ENCODE measurements at regions of chr11 and their contacts with region 1.

Region 1: DNA sequence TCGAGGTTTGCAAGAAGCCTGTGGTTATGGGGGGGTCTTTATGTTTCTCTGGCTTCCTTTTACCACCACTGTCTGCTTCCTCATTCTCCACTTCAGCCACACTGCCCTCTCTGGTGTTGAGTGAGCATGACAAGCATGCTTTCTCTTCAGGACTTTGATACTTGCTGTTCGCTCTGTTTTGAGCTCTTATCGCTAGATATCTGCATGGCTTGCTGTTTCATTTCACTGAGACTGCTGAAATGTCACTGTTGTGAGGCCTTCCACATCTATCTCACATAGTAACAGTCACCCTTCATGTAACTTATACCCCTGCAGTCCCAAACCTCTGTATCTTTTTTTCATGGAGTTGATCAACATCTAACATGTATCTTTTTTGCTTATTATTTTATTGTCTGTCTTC is 59.8 kb downstream of the TMEM135 start:
- DNase-seq: peak; percentile 3
- H3K4me3 ChIP-seq: no peak overlapping the region
- H3K27ac ChIP-seq: no peak overlapping the region
- H3K27me3 ChIP-seq: no peaks in the 10 kb centered on the region
- CTCF ChIP-seq: peak; percentile 72

Region 2: GRCh38 chr11:87081358-87081757 is 16.2 kb before region 1 on chr11:
- CTCF ChIA-PET with region 1: interaction called, 12 read pairs
- POLR2A ChIA-PET with region 1: no interaction called
- DNase-seq: no peak
- H3K4me3 ChIP-seq: no peak overlapping the region
- H3K27ac ChIP-seq: no peak overlapping the region
- H3K27me3 ChIP-seq: no peaks in the 10 kb centered on the region
- CTCF ChIP-seq: no peak

Region 3: GRCh38 chr11:87114093-87114492 is 16.5 kb after region 1 on chr11:
- CTCF ChIA-PET with region 1: interaction called, 31 read pairs
- POLR2A ChIA-PET with region 1: no interaction called
- DNase-seq: no peak
- H3K4me3 ChIP-seq: no peak overlapping the region
- H3K27ac ChIP-seq: no peak overlapping the region
- H3K27me3 ChIP-seq: no peaks in the 10 kb centered on the region
- CTCF ChIP-seq: no peak

Measured in AG04450 (cell line).